ENCODE measurements at regions of chr7 and their contacts with region 1.

Region 1: DNA sequence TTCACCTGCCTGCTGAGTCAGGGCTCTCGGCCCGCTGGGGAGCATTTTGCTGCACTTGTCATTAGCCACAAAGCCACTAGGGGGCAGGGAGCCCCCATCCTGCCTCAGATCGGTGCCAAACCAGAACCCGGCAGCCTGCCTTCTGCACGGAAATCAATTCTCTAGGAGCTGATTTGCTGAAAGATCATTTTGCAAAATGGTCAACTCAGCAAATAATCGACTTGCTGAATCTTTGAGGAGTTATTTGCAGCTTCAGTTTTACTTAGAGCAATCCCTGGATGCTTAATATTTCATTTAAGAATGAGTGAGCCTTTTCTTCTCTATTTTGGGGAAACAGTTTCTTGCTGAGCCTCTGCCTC is 1.7 kb upstream of the GIMAP8 start:
- DNase-seq: peak; percentile 75
- ATAC-seq: peak; percentile 76
- H3K4me3 ChIP-seq: no peak overlapping the region
- H3K27ac ChIP-seq: no peak overlapping the region
- H3K4me1 ChIP-seq: peaks cover 10% of the 10 kb centered on the region
- H3K27me3 ChIP-seq: peaks cover 39% of the 10 kb centered on the region
- CTCF ChIP-seq: peak; percentile 92

Region 2: DNA sequence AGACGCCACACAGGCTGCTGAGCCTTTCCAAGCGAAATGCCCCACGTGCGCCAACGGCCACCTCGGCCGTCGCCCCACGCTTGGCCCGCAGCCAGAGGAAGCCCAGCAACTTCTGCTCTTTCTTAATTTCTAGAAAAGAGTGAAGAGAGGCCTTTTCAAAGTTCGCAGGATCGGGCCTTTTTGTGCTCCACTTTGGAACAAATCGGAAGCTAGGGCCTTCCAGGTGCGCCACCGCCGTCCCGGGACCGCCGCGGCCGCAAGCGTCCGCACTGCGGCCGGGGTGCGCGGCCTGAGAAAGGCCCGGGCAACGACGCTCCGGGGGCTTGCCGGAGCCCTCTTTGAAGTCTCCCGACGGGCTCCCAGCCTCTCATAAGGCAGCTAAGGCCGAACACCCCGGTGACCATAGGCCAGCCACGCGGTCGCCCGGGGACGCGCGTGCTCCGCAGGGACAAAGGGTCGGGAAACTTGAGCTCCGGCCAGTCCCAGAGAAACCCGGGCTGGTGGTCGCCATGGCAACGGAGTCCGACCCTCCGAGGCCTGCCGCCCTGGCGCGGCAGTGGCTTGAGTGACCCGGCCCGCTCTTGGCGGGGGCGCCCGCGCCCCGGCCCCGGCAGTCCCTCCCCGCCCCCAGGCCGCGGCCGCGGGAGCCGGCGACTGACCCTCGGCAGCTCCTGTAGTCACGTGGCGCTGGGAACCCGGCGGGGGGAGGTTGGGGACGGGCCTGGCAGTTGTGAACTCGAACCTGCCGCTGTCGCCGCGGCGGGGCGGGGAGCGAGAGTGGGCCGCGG is 80.5 kb before region 1 on chr7 and contains the start of gene REPIN1:
- CTCF ChIA-PET with region 1: no interaction called
- POLR2A ChIA-PET with region 1: no interaction called
- intact Hi-C with region 1: no loop called
- DNase-seq: peak; percentile 80
- ATAC-seq: peak; percentile 54
- H3K4me3 ChIP-seq: peak within 1 kb of the TSS; percentile 87
- H3K27ac ChIP-seq: peak within 1 kb of the TSS; percentile 83
- H3K4me1 ChIP-seq: peaks cover 30% of the 10 kb centered on the region
- H3K27me3 ChIP-seq: no peaks in the 10 kb centered on the region
- CTCF ChIP-seq: no peak
- total RNA-seq, gene REPIN1: 124 and 153 TPM in 2 replicates

Region 3: GRCh38 chr7:150378853-150379440 is 69.8 kb before region 1 on chr7 and contains the start of gene ZNF775:
- CTCF ChIA-PET with region 1: no interaction called
- POLR2A ChIA-PET with region 1: no interaction called
- intact Hi-C with region 1: no loop called
- DNase-seq: peak; percentile 94
- ATAC-seq: peak; percentile 94
- H3K4me3 ChIP-seq: peak within 1 kb of the TSS; percentile 89
- H3K27ac ChIP-seq: peak within 1 kb of the TSS; percentile 49
- H3K4me1 ChIP-seq: peaks cover 18% of the 10 kb centered on the region
- H3K27me3 ChIP-seq: no peaks in the 10 kb centered on the region
- CTCF ChIP-seq: no peak
- total RNA-seq, gene ZNF775: 3.7 and 4.7 TPM in 2 replicates

Region 4: GRCh38 chr7:150404805-150405583 is 43.8 kb before region 1 on chr7:
- CTCF ChIA-PET with region 1: no interaction called
- POLR2A ChIA-PET with region 1: no interaction called
- intact Hi-C with region 1: loop called (anchors 1 kb)
- DNase-seq: peak; percentile 73
- ATAC-seq: peak; percentile 85
- H3K4me3 ChIP-seq: peak overlapping the region; percentile 78
- H3K27ac ChIP-seq: no peak overlapping the region
- H3K4me1 ChIP-seq: peaks cover 18% of the 10 kb centered on the region
- H3K27me3 ChIP-seq: no peaks in the 10 kb centered on the region
- CTCF ChIP-seq: peak; percentile 42

Region 5: DNA sequence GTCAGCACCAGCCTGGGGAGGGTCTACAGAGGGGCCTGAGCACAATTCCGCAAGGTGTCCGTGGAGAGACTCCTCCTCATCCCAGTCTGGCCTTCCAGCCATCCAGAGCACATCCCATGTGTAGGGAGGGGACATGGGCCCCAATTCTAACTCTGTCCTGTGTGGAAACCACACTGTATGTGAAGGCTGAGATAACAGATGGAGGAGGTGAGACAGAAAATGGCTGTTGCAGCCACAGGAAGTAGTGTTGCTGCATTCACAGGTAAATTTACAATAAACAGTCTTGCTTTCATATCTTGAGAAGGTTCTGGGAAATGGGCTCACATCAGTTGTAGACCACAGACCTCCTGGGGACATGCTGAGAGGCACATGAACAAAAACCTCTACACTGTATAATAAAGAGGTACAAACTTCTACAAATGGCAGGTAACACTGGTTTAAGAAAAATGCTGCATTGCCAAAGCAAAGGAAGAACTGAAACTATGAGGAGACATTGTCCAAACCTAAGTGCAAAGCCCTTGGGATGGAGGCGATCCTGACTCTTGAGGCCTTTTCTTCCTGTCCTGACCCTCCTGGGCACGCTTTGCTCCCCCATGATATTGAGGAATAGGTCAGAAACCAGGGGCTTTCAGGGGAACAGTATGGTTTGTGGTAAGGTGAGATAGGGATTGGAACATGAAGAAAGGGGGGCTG is 215.2 kb after region 1 on chr7:
- CTCF ChIA-PET with region 1: no interaction called
- POLR2A ChIA-PET with region 1: no interaction called
- intact Hi-C with region 1: no loop called
- DNase-seq: no peak
- ATAC-seq: no peak
- H3K4me3 ChIP-seq: no peak overlapping the region
- H3K27ac ChIP-seq: no peak overlapping the region
- H3K4me1 ChIP-seq: no peaks in the 10 kb centered on the region
- H3K27me3 ChIP-seq: peaks cover 12% of the 10 kb centered on the region; the same call in 1 of the 2 replicates
- CTCF ChIP-seq: no peak

Region 6: GRCh38 chr7:150685219-150686029 is 236.7 kb after region 1 on chr7 and contains the start of gene GIMAP2:
- CTCF ChIA-PET with region 1: no interaction called
- POLR2A ChIA-PET with region 1: no interaction called
- intact Hi-C with region 1: no loop called
- DNase-seq: peak; percentile 15
- ATAC-seq: peak; percentile 82
- H3K4me3 ChIP-seq: peak within 1 kb of the TSS; percentile 63
- H3K27ac ChIP-seq: no peak within 1 kb of the TSS
- H3K4me1 ChIP-seq: peaks cover 7% of the 10 kb centered on the region; the same call in 1 of the 2 replicates
- H3K27me3 ChIP-seq: peaks cover 14% of the 10 kb centered on the region; the same call in 1 of the 2 replicates
- CTCF ChIP-seq: no peak
- total RNA-seq, gene GIMAP2: not detected in 2 replicates

Region 7: DNA sequence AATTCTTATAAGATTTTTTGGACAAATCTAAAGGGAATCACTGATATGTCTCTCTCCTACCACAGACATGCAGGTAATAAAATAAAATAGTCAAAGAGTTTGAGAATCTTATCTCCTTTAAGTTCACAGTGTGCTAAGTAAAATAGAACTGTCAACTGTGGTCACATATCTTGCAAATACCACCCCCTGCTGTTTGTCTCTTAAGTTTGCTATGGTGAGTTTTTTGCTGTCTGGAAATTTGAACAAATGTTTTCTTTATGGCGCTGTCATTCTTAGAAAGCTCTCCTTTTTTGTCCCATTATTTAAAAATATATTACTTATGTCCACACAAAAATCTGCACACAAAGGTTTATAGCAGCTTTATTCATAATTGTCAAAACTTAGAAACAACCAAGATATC is 308.1 kb after region 1 on chr7:
- CTCF ChIA-PET with region 1: interaction called, 4 read pairs
- POLR2A ChIA-PET with region 1: no interaction called
- intact Hi-C with region 1: loop called (anchors 2 kb)
- DNase-seq: peak; percentile 25
- ATAC-seq: no peak
- H3K4me3 ChIP-seq: no peak overlapping the region
- H3K27ac ChIP-seq: no peak overlapping the region
- H3K4me1 ChIP-seq: no peaks in the 10 kb centered on the region
- H3K27me3 ChIP-seq: peaks cover 4% of the 10 kb centered on the region; the same call in 1 of the 2 replicates
- CTCF ChIP-seq: peak; percentile 53

Region 8: GRCh38 chr7:150778738-150779301 is 330.1 kb after region 1 on chr7:
- CTCF ChIA-PET with region 1: no interaction called
- POLR2A ChIA-PET with region 1: no interaction called
- intact Hi-C with region 1: loop called (anchors 5 kb)
- DNase-seq: peak; percentile 78
- ATAC-seq: peak; percentile 96
- H3K4me3 ChIP-seq: no peak overlapping the region
- H3K27ac ChIP-seq: no peak overlapping the region
- H3K4me1 ChIP-seq: no peaks in the 10 kb centered on the region
- H3K27me3 ChIP-seq: peaks cover 44% of the 10 kb centered on the region
- CTCF ChIP-seq: peak; percentile 89

Measured in PC-3 (cell line).